ENCODE measurements at regions of chr10 and their contacts with region 1.

Region 1: DNA sequence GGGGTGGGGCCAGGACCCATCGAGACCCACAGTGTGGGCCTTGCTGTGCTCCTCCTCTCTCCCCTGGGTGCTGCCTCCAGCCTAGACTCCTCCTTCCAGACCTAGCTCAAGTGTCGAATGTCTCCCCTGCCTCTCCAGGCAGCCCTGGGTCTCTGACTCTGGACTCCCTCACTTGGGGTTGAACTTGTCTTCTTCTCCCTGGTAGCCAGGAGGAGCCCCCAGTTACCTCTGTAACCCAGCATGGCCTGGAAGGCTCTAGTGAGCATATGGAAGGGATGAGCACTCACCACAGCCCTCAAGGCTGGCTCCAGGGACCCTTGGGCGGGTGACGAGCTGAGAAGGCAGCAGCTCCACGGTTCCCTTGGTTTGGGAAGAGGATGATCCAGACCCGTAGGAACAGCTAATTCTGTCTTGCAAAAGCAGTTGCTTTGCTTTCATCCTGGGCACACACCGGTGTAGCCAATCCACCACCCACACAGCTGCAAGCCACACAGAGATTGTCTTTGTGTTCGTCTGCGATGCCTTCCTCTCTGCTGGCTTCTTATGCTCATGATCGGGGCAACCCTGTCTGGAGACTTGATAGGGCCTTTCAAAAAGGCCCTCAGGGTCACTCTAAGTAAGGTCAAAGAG is 52.3 kb upstream of the ANTXRL start:
- DNase-seq: peak; percentile 2
- H3K4me3 Mint-ChIP-seq: no peak overlapping the region
- H3K27ac Mint-ChIP-seq: no peak overlapping the region
- H3K4me1 Mint-ChIP-seq: peaks cover 2% of the 10 kb centered on the region
- H3K27me3 Mint-ChIP-seq: peaks cover 76% of the 10 kb centered on the region
- CTCF ChIP-seq: no peak

Region 2: GRCh38 chr10:46289246-46289810 is 54.8 kb after region 1 on chr10:
- CTCF ChIA-PET with region 1: no interaction called
- intact Hi-C with region 1: no loop called
- DNase-seq: no peak
- H3K4me3 Mint-ChIP-seq: no peak overlapping the region
- H3K27ac Mint-ChIP-seq: no peak overlapping the region
- H3K4me1 Mint-ChIP-seq: peaks cover 29% of the 10 kb centered on the region
- H3K27me3 Mint-ChIP-seq: peaks cover 16% of the 10 kb centered on the region
- CTCF ChIP-seq: no peak

Region 3: DNA sequence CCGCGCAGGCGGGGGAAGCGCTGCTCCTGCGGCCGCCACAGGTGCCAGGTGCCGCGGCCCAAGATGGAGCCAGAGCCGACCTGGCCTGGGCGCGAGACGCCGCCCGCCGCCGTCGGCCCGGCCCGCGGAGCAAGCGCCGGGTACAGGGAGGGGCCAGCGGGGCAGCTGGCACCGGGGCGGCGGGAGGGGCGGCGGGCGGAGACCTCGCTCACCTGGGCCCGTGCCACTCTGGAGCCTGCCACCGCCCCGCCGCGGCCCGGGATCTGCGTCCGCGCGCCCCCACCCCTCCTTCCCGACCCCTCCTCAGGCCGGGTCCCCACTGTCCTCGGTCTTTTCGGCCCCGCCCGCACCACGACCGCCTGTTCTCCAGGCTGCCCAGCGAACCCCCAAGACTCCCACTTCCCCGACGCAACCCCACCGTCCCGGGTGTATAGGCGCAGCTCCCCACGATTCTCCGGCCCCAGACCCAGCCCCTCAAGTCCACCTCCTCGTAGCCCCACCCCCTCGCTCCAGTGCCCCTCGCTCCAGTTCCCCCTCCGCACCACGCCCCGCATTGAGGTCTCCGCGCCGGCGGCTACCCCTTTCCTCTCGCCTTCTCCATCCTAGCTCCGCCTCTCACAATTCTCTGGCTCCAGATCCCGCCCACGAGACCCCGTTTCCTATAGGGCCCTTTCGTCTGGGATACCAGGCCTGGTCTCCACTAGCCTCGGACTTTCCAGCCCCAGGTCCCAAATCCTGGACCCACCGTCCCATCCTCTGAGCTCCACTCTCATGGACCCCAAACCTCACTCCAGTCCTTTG is 322.2 kb after region 1 on chr10 and contains the start of gene GPRIN2:
- CTCF ChIA-PET with region 1: no interaction called
- intact Hi-C with region 1: loop called (anchors 5 kb)
- DNase-seq: peak; percentile 73
- H3K4me3 Mint-ChIP-seq: no peak within 1 kb of the TSS
- H3K27ac Mint-ChIP-seq: peak within 1 kb of the TSS; percentile 60
- H3K4me1 Mint-ChIP-seq: no peaks in the 10 kb centered on the region
- H3K27me3 Mint-ChIP-seq: no peaks in the 10 kb centered on the region
- CTCF ChIP-seq: no peak
- total RNA-seq, gene GPRIN2: 9.5 and 12.8 TPM in 2 replicates

Region 4: GRCh38 chr10:48187713-48188485 is 1953.4 kb after region 1 on chr10:
- CTCF ChIA-PET with region 1: no interaction called
- intact Hi-C with region 1: no loop called
- DNase-seq: no peak
- H3K4me3 Mint-ChIP-seq: no peak overlapping the region
- H3K27ac Mint-ChIP-seq: no peak overlapping the region
- H3K4me1 Mint-ChIP-seq: no peaks in the 10 kb centered on the region
- H3K27me3 Mint-ChIP-seq: peaks cover 65% of the 10 kb centered on the region
- CTCF ChIP-seq: no peak

Measured in Calu3 (cell line).